Activated CD4-positive, alpha-beta memory T cell treated with anti-CD3 and anti-CD28 coated beads for 36 hours (primary cell): ENCODE measurements at regions of chr4 and their contacts with region 1.

Region 1: GRCh38 chr4:75724066-75724866 is at the start of gene USO1:
- DNase-seq: peak; percentile 100
- H3K4me3 Mint-ChIP-seq: peak within 1 kb of the TSS; percentile 96
- H3K27ac Mint-ChIP-seq: peak within 1 kb of the TSS; percentile 98
- H3K4me1 Mint-ChIP-seq: peaks cover 51% of the 10 kb centered on the region
- H3K27me3 Mint-ChIP-seq: no peaks in the 10 kb centered on the region
- total RNA-seq, gene USO1: 57.3 to 59.0 TPM

Region 2: DNA sequence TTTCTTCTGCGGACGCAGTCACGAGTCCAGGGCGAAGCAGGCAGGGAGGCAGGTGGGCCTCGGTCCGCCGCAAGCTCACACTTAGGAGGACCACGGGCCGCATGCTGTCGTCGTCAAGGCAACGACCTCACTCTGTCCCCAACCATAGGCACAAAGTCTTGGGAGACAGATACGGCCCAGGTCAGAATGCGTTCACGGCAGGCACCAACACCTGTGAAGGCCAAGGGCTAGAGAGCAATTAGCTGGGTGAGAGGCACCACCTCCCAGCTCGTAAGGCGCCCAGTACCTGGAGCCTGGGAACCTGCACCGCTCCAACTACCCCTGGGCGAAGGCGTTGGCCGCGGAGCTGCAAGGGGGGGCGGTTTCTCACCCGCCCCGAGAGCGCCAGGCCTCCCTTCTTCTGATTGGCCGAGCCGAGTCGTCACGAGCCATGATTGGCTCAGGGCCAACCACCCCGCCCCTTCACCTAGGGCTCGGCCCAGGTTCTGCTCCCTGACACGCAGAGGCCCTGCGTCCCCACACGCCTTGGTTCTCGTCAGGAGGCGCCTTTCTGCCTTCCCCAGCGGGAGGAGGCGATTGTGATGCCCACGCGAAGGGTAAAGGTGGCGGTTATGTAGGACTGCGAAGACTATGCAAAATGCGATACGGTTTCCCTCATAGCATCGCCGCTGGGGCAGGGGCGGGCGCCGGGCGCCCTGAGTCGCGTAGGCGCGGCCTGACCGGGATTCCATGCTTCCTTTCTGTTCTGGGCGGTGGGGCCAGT is 93.9 kb before region 1 on chr4 and contains the start of gene CDKL2:
- CTCF ChIA-PET with region 1: interaction called, 5 read pairs
- POLR2A ChIA-PET with region 1: interaction called, 9 read pairs
- intact Hi-C with region 1: loop called (anchors 1 kb)
- DNase-seq: peak; percentile 94
- H3K4me3 Mint-ChIP-seq: peak within 1 kb of the TSS; percentile 79
- H3K27ac Mint-ChIP-seq: peak within 1 kb of the TSS; percentile 46
- H3K4me1 Mint-ChIP-seq: peaks cover 6% of the 10 kb centered on the region
- H3K27me3 Mint-ChIP-seq: no peaks in the 10 kb centered on the region
- total RNA-seq, gene CDKL2: 0.97 to 1.1 TPM

Region 3: GRCh38 chr4:75673027-75673958 is 51.0 kb before region 1 on chr4 and contains the start of gene G3BP2:
- CTCF ChIA-PET with region 1: interaction called, 44 read pairs
- POLR2A ChIA-PET with region 1: interaction called, 46 read pairs
- intact Hi-C with region 1: loop called (anchors 1 kb)
- DNase-seq: peak; percentile 99
- H3K4me3 Mint-ChIP-seq: peak within 1 kb of the TSS; percentile 99
- H3K27ac Mint-ChIP-seq: peak within 1 kb of the TSS; percentile 99
- H3K4me1 Mint-ChIP-seq: peaks cover 36% of the 10 kb centered on the region
- H3K27me3 Mint-ChIP-seq: peaks cover 3% of the 10 kb centered on the region
- total RNA-seq, gene G3BP2: 137 to 144 TPM

Region 4: GRCh38 chr4:75844151-75844662 is 119.9 kb after region 1 on chr4:
- CTCF ChIA-PET with region 1: interaction called, 12 read pairs
- POLR2A ChIA-PET with region 1: interaction called, 6 read pairs
- intact Hi-C with region 1: loop called (anchors 1 kb)
- DNase-seq: no peak
- H3K4me3 Mint-ChIP-seq: no peak overlapping the region
- H3K27ac Mint-ChIP-seq: no peak overlapping the region
- H3K4me1 Mint-ChIP-seq: peaks cover 10% of the 10 kb centered on the region
- H3K27me3 Mint-ChIP-seq: peaks cover 2% of the 10 kb centered on the region

Region 5: GRCh38 chr4:75940692-75941253 is 216.5 kb after region 1 on chr4 and contains the start of gene NAAA:
- CTCF ChIA-PET with region 1: no interaction called
- POLR2A ChIA-PET with region 1: interaction called, 6 read pairs
- intact Hi-C with region 1: loop called (anchors 2 kb)
- DNase-seq: peak; percentile 91
- H3K4me3 Mint-ChIP-seq: peak within 1 kb of the TSS; percentile 96
- H3K27ac Mint-ChIP-seq: peak within 1 kb of the TSS; percentile 93
- H3K4me1 Mint-ChIP-seq: peaks cover 20% of the 10 kb centered on the region
- H3K27me3 Mint-ChIP-seq: no peaks in the 10 kb centered on the region
- total RNA-seq, gene NAAA: 31.7 to 32.2 TPM

Region 6: GRCh38 chr4:76148142-76148865 is 424.0 kb after region 1 on chr4 and contains the start of gene NUP54:
- CTCF ChIA-PET with region 1: no interaction called
- POLR2A ChIA-PET with region 1: interaction called, 3 read pairs
- intact Hi-C with region 1: loop called (anchors 1 kb)
- DNase-seq: peak; percentile 98
- H3K4me3 Mint-ChIP-seq: peak within 1 kb of the TSS; percentile 91
- H3K27ac Mint-ChIP-seq: peak within 1 kb of the TSS; percentile 88
- H3K4me1 Mint-ChIP-seq: peaks cover 25% of the 10 kb centered on the region
- H3K27me3 Mint-ChIP-seq: no peaks in the 10 kb centered on the region
- total RNA-seq, gene NUP54: 51.3 to 55.9 TPM